Activated T-helper 2 cell treated with anti-CD3 and anti-CD28 coated beads, Interferon-gamma antibody, Interleukin-2, Interleukin-4, amounts not matched to agents 10 μg/mL and 5 μg/mL and 100 μg/mL, durations not matched to agents 14 hours and 24 hours and 36 hours (primary cell): ENCODE measurements at regions of chr6 and their contacts with region 1.

Region 1: DNA sequence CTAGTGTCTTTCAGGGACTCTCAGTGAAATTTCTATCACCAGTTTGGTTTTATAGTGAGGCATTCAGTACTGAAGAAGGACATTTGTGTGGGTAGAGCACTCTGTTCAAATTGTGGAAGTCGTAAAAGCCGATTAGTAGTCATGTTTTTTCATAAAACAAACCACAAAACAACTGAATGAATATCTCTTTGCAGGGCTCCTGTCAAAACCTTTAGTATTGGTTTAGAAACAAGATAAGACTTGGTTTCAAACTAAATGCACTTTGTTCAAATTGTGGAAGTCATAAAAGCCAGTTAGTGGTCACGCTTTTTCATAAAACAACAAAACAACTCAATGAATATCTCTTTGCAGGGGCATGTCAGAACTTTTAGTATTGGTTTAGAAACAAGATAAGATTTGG is 23.8 kb downstream of the ADGRF4 start:
- DNase-seq: no peak
- H3K4me3 Mint-ChIP-seq: no peak overlapping the region
- H3K27ac Mint-ChIP-seq: no peak overlapping the region
- H3K4me1 Mint-ChIP-seq: peaks cover 18% of the 10 kb centered on the region
- H3K27me3 Mint-ChIP-seq: peaks cover 27% of the 10 kb centered on the region

Region 2: GRCh38 chr6:47520282-47520681 is 201.9 kb before region 1 on chr6:
- intact Hi-C with region 1: no loop called
- DNase-seq: no peak
- H3K4me3 Mint-ChIP-seq: no peak overlapping the region
- H3K27ac Mint-ChIP-seq: no peak overlapping the region
- H3K4me1 Mint-ChIP-seq: peaks cover 4% of the 10 kb centered on the region
- H3K27me3 Mint-ChIP-seq: no peaks in the 10 kb centered on the region

Region 3: DNA sequence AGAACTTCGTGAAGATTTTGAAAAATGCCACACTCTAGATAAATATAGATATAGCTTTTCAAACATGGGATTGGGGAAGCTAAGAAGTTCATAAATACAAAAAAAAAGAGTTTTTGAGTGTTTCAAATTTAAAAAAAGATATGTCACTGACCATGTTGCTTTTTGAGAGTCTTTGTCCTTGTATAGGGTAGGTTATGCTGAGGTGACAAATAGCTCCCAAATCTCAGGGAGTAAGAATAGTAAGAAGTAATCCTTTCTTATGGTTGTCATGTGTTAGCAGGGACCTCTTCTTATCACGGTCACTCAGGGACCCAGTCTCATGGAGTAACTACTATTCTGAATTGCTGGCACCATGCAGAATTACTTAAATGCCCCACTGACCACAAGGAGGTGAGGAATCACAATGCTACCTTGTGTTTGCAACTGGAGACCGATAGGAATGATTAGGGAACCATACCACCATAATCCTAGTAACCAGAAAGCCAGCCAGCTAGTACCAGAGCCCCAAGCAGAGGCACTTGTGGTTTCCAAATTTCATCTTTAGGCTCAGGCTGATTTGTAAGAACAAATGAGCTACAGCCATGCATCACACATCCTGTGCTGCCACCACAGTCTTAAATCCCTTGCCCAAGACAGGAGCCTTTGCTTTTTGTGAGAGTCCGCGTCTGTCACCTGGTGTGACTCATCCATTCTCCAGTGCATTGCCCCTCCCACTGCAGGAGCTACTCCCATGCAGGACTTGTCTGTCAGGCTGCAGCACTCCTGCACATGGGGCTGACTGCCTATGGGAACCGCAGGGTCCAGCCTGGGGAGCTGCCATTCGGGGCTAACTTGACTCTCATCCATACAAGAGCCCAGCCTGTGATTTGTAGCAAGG is 66.2 kb before region 1 on chr6:
- intact Hi-C with region 1: loop called (anchors 10 kb)
- DNase-seq: peak; percentile 33
- H3K4me3 Mint-ChIP-seq: no peak overlapping the region
- H3K27ac Mint-ChIP-seq: no peak overlapping the region
- H3K4me1 Mint-ChIP-seq: peaks cover 5% of the 10 kb centered on the region
- H3K27me3 Mint-ChIP-seq: peaks cover 15% of the 10 kb centered on the region